ENCODE measurements at regions of chr19 and their contacts with region 1.

Region 1: DNA sequence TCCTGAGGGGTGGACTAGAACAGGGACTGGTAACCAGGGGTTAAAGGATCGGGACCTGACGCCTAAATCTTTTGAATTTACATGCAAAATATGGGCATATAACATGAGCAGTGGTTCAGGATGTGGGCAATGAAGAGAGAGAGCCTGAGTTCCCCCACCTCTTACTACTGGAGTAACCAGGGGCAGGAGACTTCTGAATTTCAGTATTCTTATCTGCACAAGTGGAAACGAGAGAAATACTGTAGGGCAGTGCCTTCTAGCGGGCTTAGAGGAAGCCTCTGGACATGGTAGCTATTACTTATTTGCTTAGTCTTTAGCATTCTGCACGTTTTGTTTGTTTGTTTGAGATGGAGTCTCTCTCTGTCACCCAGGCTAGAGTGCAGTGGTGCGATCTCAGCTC is 26.3 kb downstream of the BCAT2 start:
- DNase-seq: no peak
- H3K4me3 ChIP-seq: no peak overlapping the region
- H3K4me3 Mint-ChIP-seq: no peak overlapping the region
- H3K27ac ChIP-seq: no peak overlapping the region
- H3K27ac Mint-ChIP-seq: no peak overlapping the region
- H3K4me1 ChIP-seq: no peaks in the 10 kb centered on the region
- H3K4me1 Mint-ChIP-seq: peaks cover 3 to 4% (median 4%) of the 10 kb centered on the region in 3 donors
- H3K27me3 ChIP-seq: no peaks in the 10 kb centered on the region
- H3K27me3 Mint-ChIP-seq: peaks cover 17 to 24% of the 10 kb centered on the region in 2 donors

Region 2: GRCh38 chr19:48614431-48615230 is 169.9 kb before region 1 on chr19 and contains the start of gene FAM83E:
- CTCF ChIA-PET with region 1: no interaction called
- POLR2A ChIA-PET with region 1: no interaction called
- DNase-seq: no peak
- H3K4me3 ChIP-seq: no peak within 1 kb of the TSS
- H3K4me3 Mint-ChIP-seq: peak within 1 kb of the TSS in 3 of 7 donors; percentile 26 to 94 (median 39)
- H3K27ac ChIP-seq: no peak within 1 kb of the TSS
- H3K27ac Mint-ChIP-seq: peak within 1 kb of the TSS in 5 of 8 donors; percentile 45 to 97 (median 63)
- H3K4me1 ChIP-seq: peaks cover 26% of the 10 kb centered on the region
- H3K4me1 Mint-ChIP-seq: peaks cover 29 to 44% (median 34%) of the 10 kb centered on the region in 3 donors
- H3K27me3 ChIP-seq: no peaks in the 10 kb centered on the region
- H3K27me3 Mint-ChIP-seq: peaks cover 0 to 3% of the 10 kb centered on the region in 2 donors
- total RNA-seq, gene FAM83E: 3.7 to 5.4 TPM

Region 3: GRCh38 chr19:48683349-48683748 is 101.2 kb before region 1 on chr19:
- CTCF ChIA-PET with region 1: no interaction called
- POLR2A ChIA-PET with region 1: no interaction called
- DNase-seq: peak in 1 of 5 donors; percentile 37
- H3K4me3 ChIP-seq: no peak overlapping the region
- H3K4me3 Mint-ChIP-seq: no peak overlapping the region
- H3K27ac ChIP-seq: no peak overlapping the region
- H3K27ac Mint-ChIP-seq: peak overlapping the region in 1 of 8 donors; percentile 84
- H3K4me1 ChIP-seq: no peaks in the 10 kb centered on the region
- H3K4me1 Mint-ChIP-seq: no peaks in the 10 kb centered on the region
- H3K27me3 ChIP-seq: no peaks in the 10 kb centered on the region
- H3K27me3 Mint-ChIP-seq: no peaks in the 10 kb centered on the region

Region 4: GRCh38 chr19:48826606-48827020 is 42.1 kb after region 1 on chr19:
- CTCF ChIA-PET with region 1: interaction called, 10 read pairs
- POLR2A ChIA-PET with region 1: interaction called, 5 read pairs
- DNase-seq: no peak
- H3K4me3 ChIP-seq: no peak overlapping the region
- H3K4me3 Mint-ChIP-seq: no peak overlapping the region
- H3K27ac ChIP-seq: no peak overlapping the region
- H3K27ac Mint-ChIP-seq: no peak overlapping the region
- H3K4me1 ChIP-seq: no peaks in the 10 kb centered on the region
- H3K4me1 Mint-ChIP-seq: no peaks in the 10 kb centered on the region
- H3K27me3 ChIP-seq: no peaks in the 10 kb centered on the region
- H3K27me3 Mint-ChIP-seq: no peaks in the 10 kb centered on the region

Region 5: DNA sequence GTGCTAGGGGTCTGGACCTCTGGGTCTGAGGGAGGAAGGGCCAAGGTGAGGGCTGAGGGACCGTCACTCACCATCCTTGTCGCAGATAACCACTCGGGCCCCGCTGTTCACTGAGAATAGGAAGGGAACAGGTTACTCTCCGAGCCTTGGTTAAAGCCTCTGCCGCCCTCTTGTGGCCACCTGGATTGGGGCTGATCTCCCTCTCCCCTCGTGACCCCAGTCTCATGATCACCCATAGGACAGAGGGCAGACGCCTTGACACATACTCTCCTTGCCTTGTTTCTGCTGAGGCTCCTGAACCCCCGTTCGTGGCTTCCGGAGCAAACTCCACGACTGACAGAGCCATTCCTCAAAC is 51.2 kb after region 1 on chr19:
- CTCF ChIA-PET with region 1: interaction called, 21 read pairs
- POLR2A ChIA-PET with region 1: no interaction called
- DNase-seq: peak; percentile 83 to 93 (median 88)
- H3K4me3 ChIP-seq: peak overlapping the region; percentile 66
- H3K4me3 Mint-ChIP-seq: peak overlapping the region; percentile 76 to 90 (median 83)
- H3K27ac ChIP-seq: peak overlapping the region; percentile 53
- H3K27ac Mint-ChIP-seq: peak overlapping the region in 6 of 8 donors; percentile 28 to 95 (median 88)
- H3K4me1 ChIP-seq: peaks cover 23% of the 10 kb centered on the region
- H3K4me1 Mint-ChIP-seq: peaks cover 17 to 23% (median 23%) of the 10 kb centered on the region in 3 donors
- H3K27me3 ChIP-seq: peaks cover 8% of the 10 kb centered on the region
- H3K27me3 Mint-ChIP-seq: peaks cover 11 to 17% of the 10 kb centered on the region in 2 donors

Region 6: DNA sequence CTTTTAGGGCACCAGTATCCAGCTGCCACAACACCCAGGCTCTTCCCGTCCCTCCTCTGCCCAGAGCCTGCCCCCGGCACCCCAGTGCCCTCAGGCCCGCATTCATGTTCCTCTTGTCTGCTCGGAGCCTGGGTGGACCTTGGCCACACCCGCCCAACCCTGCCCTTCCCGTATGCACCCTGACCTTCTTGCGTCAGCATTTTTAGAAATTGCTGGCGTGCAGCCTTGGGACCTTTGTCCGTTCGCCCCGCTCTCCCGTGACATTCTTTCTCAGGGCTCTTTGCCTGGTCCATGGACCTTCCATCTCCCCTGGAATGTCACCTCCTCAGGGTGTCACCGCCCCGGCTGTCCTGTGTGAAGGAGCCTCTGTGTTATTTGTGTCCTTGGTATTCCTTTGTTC is 123.1 kb after region 1 on chr19:
- CTCF ChIA-PET with region 1: no interaction called
- POLR2A ChIA-PET with region 1: no interaction called
- DNase-seq: no peak
- H3K4me3 ChIP-seq: no peak overlapping the region
- H3K4me3 Mint-ChIP-seq: peak overlapping the region in 1 of 7 donors; percentile 19
- H3K27ac ChIP-seq: no peak overlapping the region
- H3K27ac Mint-ChIP-seq: peak overlapping the region in 1 of 8 donors; percentile 76
- H3K4me1 ChIP-seq: peaks cover under 1% of the 10 kb centered on the region
- H3K4me1 Mint-ChIP-seq: peaks cover under 1 to 5% (median 3%) of the 10 kb centered on the region in 3 donors
- H3K27me3 ChIP-seq: no peaks in the 10 kb centered on the region
- H3K27me3 Mint-ChIP-seq: no peaks in the 10 kb centered on the region

Region 7: DNA sequence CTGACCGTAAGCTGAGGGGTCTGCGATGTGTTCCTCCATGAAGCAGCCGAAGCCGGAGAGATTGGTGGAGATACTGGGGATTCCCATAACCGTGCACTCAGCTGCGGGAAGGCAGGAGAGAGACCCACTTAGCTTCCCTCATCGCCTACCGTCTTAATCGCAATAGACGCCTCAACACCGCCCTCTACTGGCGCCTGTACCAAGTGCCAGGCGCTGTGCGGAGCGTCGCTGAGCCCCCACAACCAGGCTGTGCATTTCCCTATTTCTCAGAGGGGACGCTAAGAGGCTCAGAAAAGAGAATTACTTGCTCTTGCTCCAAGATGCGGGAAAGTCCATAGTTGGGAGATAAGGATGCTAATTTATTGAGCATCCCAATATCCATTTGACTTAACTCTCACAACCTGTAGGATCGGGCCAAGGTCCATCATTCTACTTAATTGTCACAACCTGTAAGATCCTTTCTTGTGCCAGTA is 186.4 kb after region 1 on chr19:
- CTCF ChIA-PET with region 1: interaction called, 18 read pairs
- POLR2A ChIA-PET with region 1: no interaction called
- DNase-seq: peak; percentile 59 to 84 (median 72)
- H3K4me3 ChIP-seq: no peak overlapping the region
- H3K4me3 Mint-ChIP-seq: no peak overlapping the region
- H3K27ac ChIP-seq: no peak overlapping the region
- H3K27ac Mint-ChIP-seq: peak overlapping the region in 4 of 8 donors; percentile 13 to 56 (median 21)
- H3K4me1 ChIP-seq: peaks cover 12% of the 10 kb centered on the region
- H3K4me1 Mint-ChIP-seq: peaks cover 16 to 29% (median 23%) of the 10 kb centered on the region in 3 donors
- H3K27me3 ChIP-seq: no peaks in the 10 kb centered on the region
- H3K27me3 Mint-ChIP-seq: peaks cover 0 to 1% of the 10 kb centered on the region in 2 donors

Measured in CD8-positive, alpha-beta memory T cell (primary cell).